ENCODE measurements at regions of chr10 and their contacts with region 1.

Region 1: DNA sequence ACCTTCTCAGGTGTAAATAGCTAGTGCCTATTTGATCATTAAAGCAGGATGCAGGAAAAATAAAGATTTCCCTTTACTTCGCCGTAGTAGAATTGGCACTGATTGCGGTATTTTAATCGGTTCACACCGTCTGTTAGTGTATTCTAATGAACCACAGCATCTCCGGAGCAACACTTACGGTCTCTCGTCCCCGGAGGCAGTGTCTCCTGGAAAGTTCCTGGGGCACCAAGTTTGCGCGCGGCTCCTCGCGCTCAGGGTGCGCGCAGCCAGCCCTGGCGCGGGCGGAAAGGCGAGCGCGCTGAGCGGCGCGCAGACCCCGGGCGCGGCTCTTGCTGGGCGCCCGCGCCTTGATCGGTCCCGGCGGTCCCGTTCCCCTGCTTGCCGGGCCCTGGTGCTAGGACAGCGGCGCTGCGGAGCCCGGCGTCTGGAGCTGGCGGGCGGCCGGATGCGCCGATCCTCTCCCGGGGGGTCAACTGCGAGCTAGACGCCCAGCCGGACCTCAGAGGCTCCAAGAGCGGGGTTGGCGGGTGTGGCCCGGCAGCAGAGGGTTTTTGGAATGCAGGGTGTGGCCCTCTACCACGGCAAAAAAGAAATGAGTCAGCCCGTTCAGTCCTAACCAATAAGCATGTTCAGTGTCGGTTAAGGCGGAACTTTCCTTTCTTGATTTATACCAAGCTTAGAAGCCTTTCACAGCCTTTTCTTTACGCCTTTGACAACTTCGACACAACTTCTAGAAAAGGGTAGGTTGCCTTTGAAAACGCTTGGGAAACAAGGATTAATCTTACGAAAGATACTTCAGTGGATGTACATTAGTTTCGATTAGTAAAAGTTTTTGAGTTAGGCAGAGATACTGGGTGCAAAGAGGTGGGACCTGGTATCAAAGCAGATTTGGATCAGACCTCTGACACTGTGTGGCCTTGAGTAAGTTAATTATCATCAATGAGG is 166.8 kb upstream of the ASAH2 start:
- DNase-seq: peak; percentile 64
- H3K4me3 Mint-ChIP-seq: peak overlapping the region; percentile 92
- H3K27ac Mint-ChIP-seq: peak overlapping the region; percentile 85
- H3K4me1 Mint-ChIP-seq: peaks cover 74% of the 10 kb centered on the region
- H3K27me3 Mint-ChIP-seq: no peaks in the 10 kb centered on the region

Region 2: GRCh38 chr10:50275650-50276235 is 142.4 kb before region 1 on chr10:
- intact Hi-C with region 1: loop called (anchors 5 kb)
- DNase-seq: peak; percentile 5
- H3K4me3 Mint-ChIP-seq: no peak overlapping the region
- H3K27ac Mint-ChIP-seq: no peak overlapping the region
- H3K4me1 Mint-ChIP-seq: no peaks in the 10 kb centered on the region
- H3K27me3 Mint-ChIP-seq: peaks cover 18% of the 10 kb centered on the region

Region 3: DNA sequence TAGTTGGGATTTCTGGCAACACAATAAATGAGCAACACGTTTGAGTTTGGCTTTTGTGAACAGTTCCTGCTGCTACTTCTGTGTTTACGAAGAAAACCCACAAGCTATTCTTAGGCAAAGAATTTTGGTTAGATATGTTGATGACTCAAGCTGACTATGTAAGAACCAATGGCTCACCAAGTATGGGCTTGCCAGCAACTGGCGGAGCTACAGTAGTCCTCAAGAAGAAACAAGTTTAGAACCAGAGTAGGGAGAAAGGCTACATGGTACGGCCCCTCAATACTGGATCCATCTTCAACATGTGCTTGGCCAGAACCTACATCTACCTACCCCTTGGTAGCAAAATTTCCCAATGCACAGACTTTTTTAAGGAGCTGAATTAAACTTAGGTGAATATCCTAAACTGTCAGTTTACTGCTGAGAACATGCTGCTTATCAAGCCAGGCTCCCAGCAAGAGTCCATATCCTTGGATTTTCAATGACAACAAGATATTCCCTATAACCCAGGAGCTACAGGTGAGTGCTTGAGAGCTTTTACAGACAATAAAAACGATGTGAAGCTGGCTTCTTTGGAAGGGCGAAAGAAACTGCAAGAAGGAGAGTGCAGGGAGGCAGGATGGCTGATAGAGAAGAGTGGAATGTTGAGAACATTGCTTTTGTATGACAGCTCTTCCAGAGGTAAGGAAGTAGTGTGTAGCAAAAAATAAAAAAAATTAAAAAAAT is 92.5 kb before region 1 on chr10:
- intact Hi-C with region 1: loop called (anchors 5 kb)
- DNase-seq: peak; percentile 15
- H3K4me3 Mint-ChIP-seq: peak overlapping the region; percentile 79
- H3K27ac Mint-ChIP-seq: peak overlapping the region; percentile 19
- H3K4me1 Mint-ChIP-seq: peaks cover 74% of the 10 kb centered on the region
- H3K27me3 Mint-ChIP-seq: no peaks in the 10 kb centered on the region

Region 4: DNA sequence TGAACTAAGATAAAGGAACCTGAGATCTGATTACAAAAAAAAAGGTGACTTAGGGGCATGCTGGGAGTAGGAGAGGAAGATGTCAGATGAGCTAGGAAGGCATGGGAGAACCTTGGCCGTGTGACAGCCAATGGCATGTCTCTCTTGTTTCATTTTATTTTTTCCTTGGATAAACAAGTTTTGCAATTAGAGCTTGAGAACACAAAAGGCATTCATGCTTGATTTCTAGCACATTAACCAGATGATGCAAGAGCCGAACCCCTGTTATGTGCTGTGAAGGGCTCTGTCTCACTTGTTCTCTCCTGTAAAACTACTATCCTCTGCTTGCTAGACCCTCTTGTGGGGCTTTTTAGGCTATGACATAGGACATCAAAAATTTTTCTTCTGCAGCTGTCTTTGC is 32.5 kb before region 1 on chr10:
- intact Hi-C with region 1: loop called (anchors 5 kb)
- DNase-seq: no peak
- H3K4me3 Mint-ChIP-seq: no peak overlapping the region
- H3K27ac Mint-ChIP-seq: no peak overlapping the region
- H3K4me1 Mint-ChIP-seq: peaks cover 27% of the 10 kb centered on the region
- H3K27me3 Mint-ChIP-seq: no peaks in the 10 kb centered on the region

Region 5: GRCh38 chr10:50431791-50432190 is 13.6 kb after region 1 on chr10:
- intact Hi-C with region 1: loop called (anchors 1 kb)
- DNase-seq: no peak
- H3K4me3 Mint-ChIP-seq: peak overlapping the region; percentile 37
- H3K27ac Mint-ChIP-seq: peak overlapping the region; percentile 67
- H3K4me1 Mint-ChIP-seq: peaks cover 35% of the 10 kb centered on the region
- H3K27me3 Mint-ChIP-seq: no peaks in the 10 kb centered on the region

Region 6: GRCh38 chr10:50508315-50509051 is 90.3 kb after region 1 on chr10:
- intact Hi-C with region 1: loop called (anchors 1 kb)
- DNase-seq: peak; percentile 37
- H3K4me3 Mint-ChIP-seq: no peak overlapping the region
- H3K27ac Mint-ChIP-seq: no peak overlapping the region
- H3K4me1 Mint-ChIP-seq: peaks cover 79% of the 10 kb centered on the region
- H3K27me3 Mint-ChIP-seq: no peaks in the 10 kb centered on the region

Region 7: DNA sequence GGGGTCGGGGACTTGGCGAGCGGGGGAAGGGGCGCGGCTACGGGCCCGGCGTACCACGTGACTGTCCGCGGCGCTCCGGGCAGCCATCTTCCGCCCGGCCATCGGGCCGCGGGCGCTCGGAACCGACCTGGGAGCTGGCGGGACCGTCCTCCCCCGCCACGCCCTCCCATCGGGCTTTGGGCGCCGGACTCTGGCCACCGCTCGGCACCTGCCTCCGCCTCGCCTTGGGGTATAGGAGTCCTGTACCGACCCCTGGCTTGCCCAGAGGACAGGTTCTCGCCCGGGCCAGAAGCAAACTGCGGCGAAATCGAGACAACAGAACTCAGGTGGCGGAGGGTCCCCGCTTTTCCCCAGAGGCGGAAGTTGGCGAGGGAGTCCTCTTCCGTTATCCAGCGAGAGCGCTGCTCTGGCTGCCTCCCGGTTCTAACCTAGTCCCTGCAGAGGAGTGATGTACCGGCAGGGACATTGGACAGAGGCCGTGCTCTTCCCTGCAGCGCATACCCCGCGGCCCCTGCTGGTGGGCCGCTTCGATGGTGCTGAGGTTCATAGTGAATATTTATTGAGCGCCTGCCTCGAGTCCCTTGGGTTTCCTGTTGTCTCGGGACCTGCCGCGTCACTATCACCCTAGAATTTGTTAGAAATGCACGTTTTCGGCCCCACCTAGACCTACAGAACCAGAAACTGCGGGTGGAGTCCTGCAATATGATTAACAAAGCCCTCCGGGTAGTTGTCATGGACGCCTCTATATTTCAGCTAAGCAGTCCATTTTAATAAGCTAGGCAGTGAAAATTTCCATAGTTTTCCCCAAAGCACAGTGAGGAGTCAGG is 206.9 kb after region 1 on chr10:
- intact Hi-C with region 1: loop called (anchors 1 kb)
- DNase-seq: no peak
- H3K4me3 Mint-ChIP-seq: peak overlapping the region; percentile 89
- H3K27ac Mint-ChIP-seq: peak overlapping the region; percentile 88
- H3K4me1 Mint-ChIP-seq: peaks cover 43% of the 10 kb centered on the region
- H3K27me3 Mint-ChIP-seq: no peaks in the 10 kb centered on the region

Measured in activated T-helper 1 cell treated with anti-CD3 and anti-CD28 coated beads, Interleukin-12 subunit alpha, Interleukin-12 subunit beta, Interleukin-2, Interleukin-4 antibody, amounts not matched to agents 30 ng/mL and 10 ng/mL and 1 ng/mL, durations not matched to agents 14 hours and 24 hours and 36 hours (primary cell).